Breast epithelium (tissue), 4 donors: ENCODE measurements at regions of chr2 and their contacts with region 1.

Region 1: GRCh38 chr2:50333529-50334228 is 698.3 kb downstream of the NRXN1 start:
- DNase-seq: no peak
- H3K4me3 ChIP-seq: no peak overlapping the region
- H3K27ac ChIP-seq: no peak overlapping the region
- H3K4me1 ChIP-seq: no peaks in the 10 kb centered on the region
- H3K27me3 ChIP-seq: no peaks in the 10 kb centered on the region
- CTCF ChIP-seq: no peak
- POLR2A ChIP-seq: no peak

Region 2: DNA sequence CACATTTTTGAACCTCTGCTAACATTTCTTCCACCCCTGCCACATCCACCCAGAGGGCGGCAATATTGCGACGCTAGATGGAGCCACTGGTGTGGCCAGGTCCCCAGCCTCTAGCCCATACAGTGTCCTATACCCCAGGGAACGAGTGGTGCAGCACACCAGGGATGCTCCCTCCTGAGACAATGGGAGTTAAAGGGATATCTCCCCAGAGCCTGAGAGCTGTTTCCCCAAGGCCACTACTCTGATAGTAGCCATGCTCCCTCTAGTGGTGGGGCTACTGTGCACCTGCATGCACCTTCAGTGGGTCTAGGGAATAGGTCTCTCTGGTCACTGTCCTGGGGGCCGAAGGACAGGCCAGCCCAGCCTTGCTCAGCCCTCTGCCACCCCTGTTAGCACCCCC is 843.0 kb before region 1 on chr2:
- intact Hi-C with region 1: loop called (anchors 5 kb)
- DNase-seq: no peak
- H3K4me3 ChIP-seq: no peak overlapping the region
- H3K27ac ChIP-seq: no peak overlapping the region
- H3K4me1 ChIP-seq: no peaks in the 10 kb centered on the region
- H3K27me3 ChIP-seq: no peaks in the 10 kb centered on the region
- CTCF ChIP-seq: no peak
- POLR2A ChIP-seq: no peak

Region 3: GRCh38 chr2:50273003-50273402 is 60.7 kb before region 1 on chr2:
- intact Hi-C with region 1: no loop called
- DNase-seq: no peak
- H3K4me3 ChIP-seq: no peak overlapping the region
- H3K27ac ChIP-seq: no peak overlapping the region
- H3K4me1 ChIP-seq: no peaks in the 10 kb centered on the region
- H3K27me3 ChIP-seq: no peaks in the 10 kb centered on the region
- CTCF ChIP-seq: no peak
- POLR2A ChIP-seq: no peak

Region 4: GRCh38 chr2:50295596-50295995 is 38.1 kb before region 1 on chr2:
- intact Hi-C with region 1: no loop called
- DNase-seq: no peak
- H3K4me3 ChIP-seq: no peak overlapping the region
- H3K27ac ChIP-seq: no peak overlapping the region
- H3K4me1 ChIP-seq: no peaks in the 10 kb centered on the region
- H3K27me3 ChIP-seq: no peaks in the 10 kb centered on the region
- CTCF ChIP-seq: no peak
- POLR2A ChIP-seq: no peak

Region 5: DNA sequence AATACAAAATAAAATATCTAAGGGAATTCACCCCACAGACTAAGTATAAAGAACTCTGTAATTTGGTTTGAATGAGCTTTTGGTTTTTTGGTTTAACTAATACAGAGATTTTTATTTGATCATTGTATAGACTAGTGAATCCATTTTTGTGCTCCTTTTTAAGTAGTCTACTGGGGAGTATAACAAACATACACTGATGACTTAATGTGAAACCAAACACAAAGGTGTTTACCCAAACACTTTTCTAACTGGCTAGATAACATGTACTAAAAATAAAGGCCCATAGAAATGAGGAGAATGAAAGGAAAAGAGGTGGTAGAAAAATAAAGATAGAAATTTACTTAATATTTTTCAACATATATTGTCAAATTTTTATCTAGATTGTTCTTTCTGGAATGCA is 552.3 kb after region 1 on chr2:
- intact Hi-C with region 1: loop called (anchors 10 kb)
- DNase-seq: no peak
- H3K4me3 ChIP-seq: no peak overlapping the region
- H3K27ac ChIP-seq: no peak overlapping the region
- H3K4me1 ChIP-seq: no peaks in the 10 kb centered on the region
- H3K27me3 ChIP-seq: no peaks in the 10 kb centered on the region
- CTCF ChIP-seq: no peak
- POLR2A ChIP-seq: no peak